ENCODE measurements at regions of chr7 and their contacts with region 1.

Region 1: DNA sequence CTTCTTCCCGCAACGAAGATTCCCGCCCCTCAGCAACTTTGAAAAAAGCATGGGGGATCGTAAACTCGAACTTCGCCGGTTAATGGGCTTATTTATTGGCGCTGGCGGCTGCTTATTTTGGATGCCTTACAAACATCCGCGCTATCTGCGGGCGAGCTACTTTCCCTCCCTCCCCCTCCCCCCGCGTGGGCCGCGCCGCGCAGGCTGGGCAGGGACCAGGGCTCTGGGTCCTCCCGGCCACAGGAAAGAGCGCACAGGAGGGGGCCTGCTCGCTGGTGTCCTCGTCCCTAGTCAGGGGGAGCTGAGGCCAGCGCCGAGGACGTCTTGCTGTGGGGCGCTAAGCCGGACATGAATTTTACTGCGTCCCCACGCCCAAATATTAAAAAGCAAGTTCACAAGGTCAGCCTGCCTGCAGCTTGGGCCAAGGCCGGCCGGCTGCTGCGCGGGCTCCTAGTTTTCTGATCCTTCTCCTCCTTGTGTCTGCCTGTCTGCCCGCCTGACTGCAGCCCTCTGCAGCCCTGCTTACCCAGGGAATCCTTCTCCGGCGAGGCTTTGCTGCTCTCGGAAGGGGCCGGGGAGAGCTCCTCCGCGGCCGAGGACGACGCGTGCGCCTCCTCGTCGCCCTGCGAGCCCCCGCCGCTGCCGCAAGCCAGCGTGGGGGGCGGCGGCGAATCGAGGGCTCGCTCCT is 1.2 kb downstream of the HOXA10 start:
- DNase-seq: no peak
- H3K4me3 Mint-ChIP-seq: no peak overlapping the region
- H3K27ac Mint-ChIP-seq: no peak overlapping the region
- H3K4me1 Mint-ChIP-seq: peaks cover 25% of the 10 kb centered on the region
- H3K27me3 Mint-ChIP-seq: peaks cover 66% of the 10 kb centered on the region

Region 2: DNA sequence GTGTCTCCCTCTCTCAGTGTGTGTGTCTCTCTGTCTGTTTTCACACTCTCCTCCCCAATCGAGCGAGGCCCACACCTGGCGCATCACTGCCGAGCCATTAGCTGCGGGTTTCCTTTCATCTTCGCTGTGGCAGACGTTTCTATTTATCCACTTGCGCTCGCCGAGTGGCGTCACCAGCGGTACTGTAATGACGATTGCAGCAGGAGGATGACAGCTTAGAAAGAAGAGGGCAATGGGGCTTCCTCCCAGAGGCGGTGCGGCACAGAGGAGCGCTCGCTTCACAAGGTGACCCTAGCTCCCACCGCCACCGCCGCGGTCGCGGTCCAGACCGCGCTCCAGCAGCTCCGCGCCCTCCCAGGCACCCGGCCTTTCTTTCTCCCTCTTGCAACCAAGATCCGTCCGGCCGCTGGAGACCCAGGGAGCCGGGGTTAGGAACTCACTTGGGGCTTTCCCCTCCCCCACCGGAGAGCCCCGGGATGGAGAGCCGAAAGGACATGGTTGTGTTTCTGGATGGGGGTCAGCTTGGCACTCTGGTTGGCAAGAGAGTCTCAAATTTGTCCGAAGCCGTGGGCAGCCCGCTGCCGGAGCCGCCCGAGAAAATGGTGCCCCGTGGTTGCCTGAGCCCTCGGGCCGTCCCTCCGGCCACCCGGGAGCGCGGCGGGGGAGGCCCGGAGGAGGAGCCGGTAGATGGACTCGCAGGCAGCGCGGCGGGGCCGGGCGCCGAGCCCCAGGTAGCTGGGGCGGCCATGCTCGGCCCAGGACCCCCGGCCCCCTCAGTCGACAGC is 69.8 kb after region 1 on chr7 and contains the start of gene EVX1:
- CTCF ChIA-PET with region 1: no interaction called
- intact Hi-C with region 1: loop called (anchors 5 kb)
- DNase-seq: peak; percentile 78
- H3K4me3 Mint-ChIP-seq: peak within 1 kb of the TSS; percentile 58
- H3K27ac Mint-ChIP-seq: no peak within 1 kb of the TSS
- H3K4me1 Mint-ChIP-seq: peaks cover 25% of the 10 kb centered on the region
- H3K27me3 Mint-ChIP-seq: peaks cover 79% of the 10 kb centered on the region
- total RNA-seq, gene EVX1: not detected

Region 3: DNA sequence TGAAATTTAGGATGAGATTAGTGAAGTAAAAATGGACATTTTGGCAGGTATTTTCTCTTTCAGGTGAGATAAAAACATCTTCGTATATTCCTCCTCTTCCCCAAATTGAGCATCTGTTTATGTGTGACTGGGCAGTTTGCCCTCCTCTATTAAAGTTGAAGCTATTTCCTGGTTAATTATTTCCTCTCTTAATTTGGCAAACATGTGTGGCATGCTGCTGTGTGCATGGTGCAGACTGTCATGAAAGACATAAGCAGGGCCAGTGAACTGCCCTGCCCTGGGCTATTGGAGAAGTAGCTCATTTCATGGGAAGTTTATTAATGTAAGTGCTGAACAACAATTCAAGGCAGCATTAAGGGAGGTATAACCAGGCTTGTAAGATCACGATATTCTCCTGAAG is 122.3 kb after region 1 on chr7:
- CTCF ChIA-PET with region 1: no interaction called
- intact Hi-C with region 1: no loop called
- DNase-seq: no peak
- H3K4me3 Mint-ChIP-seq: no peak overlapping the region
- H3K27ac Mint-ChIP-seq: no peak overlapping the region
- H3K4me1 Mint-ChIP-seq: no peaks in the 10 kb centered on the region
- H3K27me3 Mint-ChIP-seq: peaks cover 21% of the 10 kb centered on the region

Measured in activated naive CD4-positive, alpha-beta T cell treated with anti-CD3 and anti-CD28 coated beads for 36 hours (primary cell).